Panc1 (cell line): ENCODE measurements at regions of chr6 and their contacts with region 1.

Region 1: GRCh38 chr6:7172649-7173048 is 64.9 kb downstream of the RREB1 start:
- DNase-seq: no peak
- ATAC-seq: 0 out of 2 replicates have a peak, but pooled peaks have one; percentile 29
- H3K4me3 ChIP-seq: no peak overlapping the region
- H3K27ac ChIP-seq: no peak overlapping the region
- H3K4me1 ChIP-seq: peaks cover 19% of the 10 kb centered on the region
- H3K27me3 ChIP-seq: no peaks in the 10 kb centered on the region
- CTCF ChIP-seq: no peak

Region 2: GRCh38 chr6:7152462-7152861 is 20.2 kb before region 1 on chr6:
- CTCF ChIA-PET with region 1: no interaction called
- POLR2A ChIA-PET with region 1: interaction called, 14 read pairs
- in situ Hi-C with region 1: no loop called
- intact Hi-C with region 1: no loop called
- DNase-seq: no peak
- ATAC-seq: no peak
- H3K4me3 ChIP-seq: no peak overlapping the region
- H3K27ac ChIP-seq: no peak overlapping the region
- H3K4me1 ChIP-seq: peaks cover 20% of the 10 kb centered on the region
- H3K27me3 ChIP-seq: no peaks in the 10 kb centered on the region
- CTCF ChIP-seq: no peak

Region 3: DNA sequence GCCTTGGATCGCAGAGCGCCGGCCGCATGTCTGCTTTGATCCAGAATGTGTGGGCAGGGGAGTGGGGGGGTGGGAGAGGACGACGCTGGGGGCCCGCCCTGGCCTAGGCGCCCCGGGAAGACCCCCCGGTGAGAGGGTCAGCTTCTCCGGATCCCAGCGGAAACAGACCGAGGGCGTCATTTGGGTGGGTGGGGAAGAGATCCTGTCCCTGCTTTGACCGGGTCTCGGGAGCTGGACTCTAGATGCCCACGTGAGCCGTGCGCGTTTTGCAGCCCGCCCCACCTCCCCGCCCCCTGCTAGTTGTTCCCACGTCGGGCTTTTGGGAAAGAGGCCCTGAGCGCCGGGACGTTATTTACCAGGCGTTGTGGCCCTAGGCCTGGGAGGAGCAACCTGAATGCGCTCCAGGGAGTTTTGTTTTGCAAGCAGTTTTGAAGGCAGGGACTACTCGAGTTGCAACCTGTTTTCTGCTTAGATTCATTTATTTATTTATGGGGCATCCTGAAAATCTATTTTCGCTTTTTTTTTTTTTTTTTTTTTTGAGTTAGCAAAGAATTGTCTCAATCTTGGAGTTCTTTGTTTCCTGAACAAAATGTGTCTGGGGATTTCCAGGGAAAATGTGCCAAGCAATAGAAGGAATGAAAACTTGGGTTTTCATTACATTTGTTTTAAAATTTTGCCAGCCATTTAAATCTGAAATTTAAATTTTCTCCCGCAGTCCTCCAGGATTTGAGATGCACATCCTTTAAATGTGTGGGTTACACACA is 370.4 kb after region 1 on chr6:
- CTCF ChIA-PET with region 1: no interaction called
- POLR2A ChIA-PET with region 1: interaction called, 11 read pairs
- in situ Hi-C with region 1: no loop called
- intact Hi-C with region 1: no loop called
- DNase-seq: no peak
- ATAC-seq: peak; percentile 64
- H3K4me3 ChIP-seq: peak overlapping the region; percentile 50 to 61
- H3K27ac ChIP-seq: peak overlapping the region; percentile 15; the same call in 1 of the 2 replicates
- H3K4me1 ChIP-seq: peaks cover 4% of the 10 kb centered on the region
- H3K27me3 ChIP-seq: peaks cover 29% of the 10 kb centered on the region
- CTCF ChIP-seq: no peak